ENCODE measurements at regions of chr5 and their contacts with region 1.

Region 1: GRCh38 chr5:156934450-156935211 is 28.4 kb downstream of the TIMD4 start:
- DNase-seq: peak; percentile 30 to 75 (median 48)
- ATAC-seq: peak; percentile 56
- H3K4me3 ChIP-seq: peak overlapping the region; percentile 19
- H3K4me3 Mint-ChIP-seq: peak overlapping the region; percentile 2
- H3K27ac ChIP-seq: no peak overlapping the region
- H3K27ac Mint-ChIP-seq: no peak overlapping the region
- H3K4me1 ChIP-seq: peaks cover 5% of the 10 kb centered on the region
- H3K4me1 Mint-ChIP-seq: peaks cover 24% of the 10 kb centered on the region
- H3K27me3 ChIP-seq: no peaks in the 10 kb centered on the region
- H3K27me3 Mint-ChIP-seq: no peaks in the 10 kb centered on the region
- CTCF ChIP-seq: peak; percentile 78

Region 2: GRCh38 chr5:155136216-155136850 is 1798.3 kb before region 1 on chr5:
- CTCF ChIA-PET with region 1: no interaction called
- POLR2A ChIA-PET with region 1: no interaction called
- intact Hi-C with region 1: loop called in 1 of 2 experiments (anchors 10 kb)
- DNase-seq: no peak
- ATAC-seq: no peak
- H3K4me3 ChIP-seq: no peak overlapping the region
- H3K4me3 Mint-ChIP-seq: no peak overlapping the region
- H3K27ac ChIP-seq: no peak overlapping the region
- H3K27ac Mint-ChIP-seq: no peak overlapping the region
- H3K4me1 ChIP-seq: no peaks in the 10 kb centered on the region
- H3K4me1 Mint-ChIP-seq: no peaks in the 10 kb centered on the region
- H3K27me3 ChIP-seq: peaks cover 2 to 4% of the 10 kb centered on the region in 2 experiments
- H3K27me3 Mint-ChIP-seq: peaks cover 55% of the 10 kb centered on the region
- CTCF ChIP-seq: no peak

Region 3: GRCh38 chr5:155943516-155944407 is 990.9 kb before region 1 on chr5:
- CTCF ChIA-PET with region 1: no interaction called
- POLR2A ChIA-PET with region 1: no interaction called
- intact Hi-C with region 1: loop called (anchors 2 to 10 kb)
- DNase-seq: peak in 10 of 14 experiments; percentile 1 to 54 (median 17)
- ATAC-seq: peak; percentile 46
- H3K4me3 ChIP-seq: no peak overlapping the region
- H3K4me3 Mint-ChIP-seq: no peak overlapping the region
- H3K27ac ChIP-seq: no peak overlapping the region
- H3K27ac Mint-ChIP-seq: no peak overlapping the region
- H3K4me1 ChIP-seq: no peaks in the 10 kb centered on the region
- H3K4me1 Mint-ChIP-seq: no peaks in the 10 kb centered on the region
- H3K27me3 ChIP-seq: no peaks in the 10 kb centered on the region
- H3K27me3 Mint-ChIP-seq: peaks cover 21% of the 10 kb centered on the region
- CTCF ChIP-seq: peak; percentile 56

Region 4: DNA sequence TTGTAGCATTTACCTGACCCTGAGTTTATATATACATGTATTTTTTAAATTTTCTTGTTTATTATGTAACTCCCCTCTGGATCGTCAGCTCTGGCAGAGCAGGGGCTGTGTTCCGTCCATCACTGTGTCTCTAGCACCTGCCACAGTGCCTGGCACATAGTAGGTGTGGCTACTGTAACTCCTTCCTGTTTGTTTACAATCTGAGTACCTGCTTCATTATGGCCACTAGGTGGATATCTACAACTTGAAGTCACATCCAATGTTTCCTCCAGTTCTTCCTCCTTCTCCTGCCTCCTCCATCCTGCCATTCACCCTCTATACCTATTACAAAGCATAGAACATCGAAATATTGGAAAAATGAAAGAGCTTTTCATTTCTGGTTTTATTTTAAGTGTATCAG is 98.7 kb before region 1 on chr5:
- CTCF ChIA-PET with region 1: no interaction called
- POLR2A ChIA-PET with region 1: no interaction called
- intact Hi-C with region 1: loop called in 1 of 2 experiments (anchors 5 kb)
- DNase-seq: peak in 3 of 14 experiments; percentile 4 to 35 (median 23)
- ATAC-seq: no peak
- H3K4me3 ChIP-seq: no peak overlapping the region
- H3K4me3 Mint-ChIP-seq: no peak overlapping the region
- H3K27ac ChIP-seq: no peak overlapping the region
- H3K27ac Mint-ChIP-seq: no peak overlapping the region
- H3K4me1 ChIP-seq: no peaks in the 10 kb centered on the region
- H3K4me1 Mint-ChIP-seq: no peaks in the 10 kb centered on the region
- H3K27me3 ChIP-seq: no peaks in the 10 kb centered on the region
- H3K27me3 Mint-ChIP-seq: no peaks in the 10 kb centered on the region
- CTCF ChIP-seq: peak; percentile 27

Region 5: GRCh38 chr5:157130925-157131324 is 196.3 kb after region 1 on chr5:
- CTCF ChIA-PET with region 1: no interaction called
- POLR2A ChIA-PET with region 1: no interaction called
- intact Hi-C with region 1: loop called in 1 of 2 experiments (anchors 5 kb)
- DNase-seq: no peak
- ATAC-seq: no peak
- H3K4me3 ChIP-seq: no peak overlapping the region
- H3K4me3 Mint-ChIP-seq: no peak overlapping the region
- H3K27ac ChIP-seq: no peak overlapping the region
- H3K27ac Mint-ChIP-seq: no peak overlapping the region
- H3K4me1 ChIP-seq: peaks cover 8% of the 10 kb centered on the region
- H3K4me1 Mint-ChIP-seq: peaks cover 33% of the 10 kb centered on the region
- H3K27me3 ChIP-seq: no peaks in the 10 kb centered on the region
- H3K27me3 Mint-ChIP-seq: no peaks in the 10 kb centered on the region
- CTCF ChIP-seq: no peak

Measured in CD4-positive, alpha-beta T cell (primary cell).